AG04449 (cell line): ENCODE measurements at regions of chr17 and their contacts with region 1.

Region 1: GRCh38 chr17:752002-752619 is at the start of gene GEMIN4:
- DNase-seq: no peak
- H3K4me3 ChIP-seq: peak within 1 kb of the TSS; percentile 72
- CTCF ChIP-seq: peak; percentile 98

Region 2: DNA sequence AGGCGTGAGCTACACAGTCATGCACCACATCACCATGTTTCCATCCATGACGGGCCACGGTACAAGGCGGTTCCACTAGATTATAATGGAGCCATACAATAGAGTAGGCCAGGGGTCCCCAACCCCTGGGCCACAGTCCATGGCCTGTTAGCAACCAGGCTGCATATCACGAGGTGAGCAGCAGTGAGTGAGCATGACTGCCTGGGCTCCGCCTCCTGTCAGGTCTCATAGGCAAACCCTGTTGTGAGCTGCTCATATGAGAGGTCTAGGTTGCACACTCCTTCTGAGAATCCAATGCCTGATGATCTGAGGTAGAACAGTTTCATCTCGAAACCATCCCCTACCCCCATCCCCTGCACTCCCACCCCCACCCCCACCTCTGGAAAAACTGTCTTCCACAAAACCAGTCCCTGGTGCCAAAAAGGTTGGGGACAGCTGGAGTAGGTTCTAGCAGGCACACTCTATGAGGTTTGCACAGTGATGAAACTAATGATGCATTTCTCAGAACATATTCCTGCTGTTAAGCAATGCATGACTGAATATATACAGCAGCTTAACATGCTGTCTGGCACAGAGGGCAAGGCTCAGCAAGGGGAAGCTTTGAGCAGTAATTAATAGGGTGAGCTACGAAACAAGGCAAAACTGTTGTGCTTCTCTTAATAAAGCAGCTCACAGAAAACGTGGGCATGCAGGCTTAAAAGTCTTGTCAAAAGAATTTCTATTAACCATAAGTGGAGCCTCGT is 145.4 kb before region 1 on chr17:
- CTCF ChIA-PET with region 1: no interaction called
- POLR2A ChIA-PET with region 1: no interaction called
- DNase-seq: no peak
- H3K4me3 ChIP-seq: no peak overlapping the region
- CTCF ChIP-seq: no peak

Region 3: GRCh38 chr17:740240-741017 is 11.7 kb before region 1 on chr17:
- CTCF ChIA-PET with region 1: interaction called, 48 read pairs
- POLR2A ChIA-PET with region 1: interaction called, 4 read pairs
- DNase-seq: no peak
- H3K4me3 ChIP-seq: no peak overlapping the region
- CTCF ChIP-seq: no peak

Region 4: GRCh38 chr17:773467-774312 is 21.6 kb after region 1 on chr17:
- CTCF ChIA-PET with region 1: interaction called, 11 read pairs
- POLR2A ChIA-PET with region 1: no interaction called
- DNase-seq: no peak
- H3K4me3 ChIP-seq: no peak overlapping the region
- CTCF ChIP-seq: no peak

Region 5: DNA sequence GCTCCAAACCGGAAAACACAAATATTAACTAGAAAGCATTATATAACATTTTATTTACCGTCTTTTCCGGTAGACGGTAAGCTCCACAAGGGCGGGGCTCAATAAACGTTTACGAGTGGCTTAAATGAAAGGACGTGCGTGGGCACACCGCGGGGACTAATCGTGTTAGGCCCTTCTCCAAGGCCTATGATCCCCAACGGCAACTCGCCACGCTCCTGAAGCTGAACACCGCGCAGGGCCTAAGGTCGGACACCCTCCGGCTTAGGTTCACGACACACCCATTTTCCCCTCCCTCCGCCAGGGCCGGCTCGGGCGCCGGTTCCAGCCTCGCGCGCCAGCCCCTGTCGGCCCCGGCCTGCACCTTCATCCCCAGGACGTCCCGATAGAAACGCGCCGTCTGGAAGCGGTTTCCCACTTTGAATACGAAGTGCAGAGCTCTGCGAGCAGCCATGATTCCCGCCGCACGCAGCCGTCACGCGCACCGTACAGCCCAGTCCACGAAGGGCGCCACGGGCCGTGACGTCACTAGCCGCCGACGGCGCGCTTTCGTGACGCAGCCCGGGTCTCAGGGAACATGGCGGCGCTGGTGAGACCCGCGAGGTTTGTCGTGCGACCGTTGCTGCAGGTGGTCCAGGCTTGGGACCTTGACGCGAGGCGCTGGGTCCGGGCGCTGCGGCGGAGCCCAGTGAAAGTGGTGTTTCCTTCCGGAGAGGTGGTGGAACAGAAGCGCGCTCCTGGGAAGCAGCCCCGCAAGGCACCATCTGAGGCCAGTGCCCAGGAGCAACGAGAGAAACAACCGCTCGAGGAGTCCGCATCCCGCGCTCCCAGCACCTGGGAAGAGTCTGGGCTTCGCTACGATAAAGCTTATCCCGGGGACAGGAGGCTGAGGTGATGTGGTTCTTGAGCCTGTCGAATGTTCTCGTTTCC is 30.0 kb after region 1 on chr17 and contains the starts of genes GLOD4 and MRM3:
- CTCF ChIA-PET with region 1: interaction called, 18 read pairs
- POLR2A ChIA-PET with region 1: no interaction called
- DNase-seq: no peak
- H3K4me3 ChIP-seq: peak within 1 kb of the TSS; percentile 98
- CTCF ChIP-seq: no peak